PC-9 (cell line): ENCODE measurements at regions of chr1 and their contacts with region 1.

Region 1: DNA sequence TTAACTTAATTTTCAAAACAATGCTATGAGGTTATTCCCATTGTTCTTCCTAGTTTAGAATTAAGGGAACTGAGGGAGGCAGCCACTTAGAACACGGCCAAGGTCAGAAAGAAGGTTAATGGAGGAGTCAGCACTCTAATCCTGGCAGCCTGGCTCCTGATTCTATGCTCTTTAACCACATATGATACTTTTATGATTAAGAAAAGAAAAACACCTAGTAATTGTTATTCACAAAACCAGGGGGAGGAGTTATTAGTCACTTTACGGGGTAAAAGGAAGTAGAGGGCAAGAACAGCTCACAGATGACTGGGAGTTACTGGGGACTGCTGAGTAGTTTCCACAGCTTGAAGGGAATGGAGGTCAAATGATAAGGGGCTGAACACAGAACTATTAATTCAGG is 38.6 kb downstream of the GADD45A start:
- DNase-seq: peak in 1 of 2 experiments; percentile 52
- H3K4me3 ChIP-seq: no peak overlapping the region
- H3K27ac ChIP-seq: peak overlapping the region; percentile 24; the same call in 1 of the 2 replicates
- H3K4me1 ChIP-seq: peaks cover 27% of the 10 kb centered on the region
- H3K27me3 ChIP-seq: no peaks in the 10 kb centered on the region
- CTCF ChIP-seq: no peak

Region 2: DNA sequence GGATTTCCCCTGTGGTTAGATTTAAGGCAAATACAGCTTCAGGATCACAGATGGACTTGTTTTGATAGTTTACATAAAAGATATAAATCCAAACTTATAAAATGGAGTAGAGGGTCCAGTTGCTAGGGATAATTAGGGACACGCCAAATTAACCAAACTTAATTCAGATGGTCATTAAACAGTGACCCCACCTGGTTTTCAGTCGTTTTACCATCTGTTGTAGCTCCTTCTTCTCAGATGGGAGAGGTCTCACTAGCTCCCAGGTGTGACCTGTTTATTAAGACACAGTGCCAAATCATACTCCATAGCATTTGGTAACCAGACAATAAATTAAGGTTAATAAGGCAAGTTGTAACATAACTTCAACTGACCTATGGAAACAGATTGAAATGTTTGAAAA is 46.7 kb before region 1 on chr1:
- CTCF ChIA-PET with region 1: interaction called, 14 read pairs
- POLR2A ChIA-PET with region 1: no interaction called
- intact Hi-C with region 1: no loop called
- DNase-seq: no peak
- H3K4me3 ChIP-seq: no peak overlapping the region
- H3K27ac ChIP-seq: no peak overlapping the region
- H3K4me1 ChIP-seq: peaks cover 39% of the 10 kb centered on the region
- H3K27me3 ChIP-seq: no peaks in the 10 kb centered on the region
- CTCF ChIP-seq: no peak

Region 3: GRCh38 chr1:67753776-67754525 is 30.3 kb after region 1 on chr1:
- CTCF ChIA-PET with region 1: interaction called, 5 read pairs
- POLR2A ChIA-PET with region 1: interaction called, 11 read pairs
- intact Hi-C with region 1: no loop called
- DNase-seq: peak; percentile 33 to 75
- H3K4me3 ChIP-seq: no peak overlapping the region
- H3K27ac ChIP-seq: no peak overlapping the region
- H3K4me1 ChIP-seq: peaks cover 43% of the 10 kb centered on the region
- H3K27me3 ChIP-seq: no peaks in the 10 kb centered on the region
- CTCF ChIP-seq: no peak

Region 4: GRCh38 chr1:67766141-67766978 is 42.7 kb after region 1 on chr1:
- CTCF ChIA-PET with region 1: no interaction called
- POLR2A ChIA-PET with region 1: no interaction called
- intact Hi-C with region 1: no loop called
- DNase-seq: peak in 1 of 2 experiments; percentile 44
- H3K4me3 ChIP-seq: no peak overlapping the region
- H3K27ac ChIP-seq: no peak overlapping the region
- H3K4me1 ChIP-seq: no peaks in the 10 kb centered on the region
- H3K27me3 ChIP-seq: no peaks in the 10 kb centered on the region
- CTCF ChIP-seq: peak; percentile 99

Region 5: DNA sequence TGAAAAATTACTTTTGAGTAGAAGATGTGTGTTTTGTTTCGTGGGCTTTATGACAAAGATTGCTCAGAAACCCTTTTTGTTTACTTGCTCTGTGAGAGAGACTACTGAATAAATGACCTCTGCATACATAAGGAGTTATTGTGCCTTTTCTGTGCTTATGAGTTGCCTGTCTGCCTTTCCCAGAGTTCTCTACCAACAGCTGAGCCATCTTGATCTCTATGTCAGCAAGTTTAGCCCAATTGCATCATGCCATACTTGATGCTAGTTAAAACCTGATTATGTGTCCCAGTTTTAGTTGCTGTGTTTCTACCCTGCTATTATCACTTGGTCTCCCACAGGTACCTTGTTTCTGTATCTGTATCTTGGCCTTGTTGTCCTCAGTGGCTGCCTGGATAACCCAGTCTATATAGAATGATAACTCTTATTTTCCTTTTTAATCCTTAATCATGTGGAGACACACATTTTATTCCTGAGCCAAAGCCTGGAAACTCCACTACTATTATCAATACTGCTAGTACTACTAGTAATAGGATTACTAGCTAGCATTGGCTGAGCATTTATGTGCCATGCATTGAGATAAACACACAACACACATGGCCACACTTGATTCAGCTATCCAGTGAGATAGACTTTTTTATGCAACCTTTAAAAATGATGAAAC is 138.4 kb after region 1 on chr1:
- CTCF ChIA-PET with region 1: no interaction called
- POLR2A ChIA-PET with region 1: no interaction called
- intact Hi-C with region 1: no loop called
- DNase-seq: no peak
- H3K4me3 ChIP-seq: no peak overlapping the region
- H3K27ac ChIP-seq: no peak overlapping the region
- H3K4me1 ChIP-seq: no peaks in the 10 kb centered on the region
- H3K27me3 ChIP-seq: no peaks in the 10 kb centered on the region
- CTCF ChIP-seq: no peak